Endothelial cell of umbilical vein (primary cell): ENCODE measurements at regions of chr14 and their contacts with region 1.

Region 1: GRCh38 chr14:61525293-61526011 is 169.9 kb upstream of the HIF1A start:
- DNase-seq: peak; percentile 88
- H3K4me3 ChIP-seq: peak overlapping the region in 1 of 3 experiments; percentile 6
- H3K27ac ChIP-seq: peak overlapping the region; percentile 89
- H3K4me1 ChIP-seq: peaks cover 55% of the 10 kb centered on the region
- H3K27me3 ChIP-seq: no peaks in the 10 kb centered on the region
- CTCF ChIP-seq: no peak
- POLR2A ChIP-seq: no peak

Region 2: DNA sequence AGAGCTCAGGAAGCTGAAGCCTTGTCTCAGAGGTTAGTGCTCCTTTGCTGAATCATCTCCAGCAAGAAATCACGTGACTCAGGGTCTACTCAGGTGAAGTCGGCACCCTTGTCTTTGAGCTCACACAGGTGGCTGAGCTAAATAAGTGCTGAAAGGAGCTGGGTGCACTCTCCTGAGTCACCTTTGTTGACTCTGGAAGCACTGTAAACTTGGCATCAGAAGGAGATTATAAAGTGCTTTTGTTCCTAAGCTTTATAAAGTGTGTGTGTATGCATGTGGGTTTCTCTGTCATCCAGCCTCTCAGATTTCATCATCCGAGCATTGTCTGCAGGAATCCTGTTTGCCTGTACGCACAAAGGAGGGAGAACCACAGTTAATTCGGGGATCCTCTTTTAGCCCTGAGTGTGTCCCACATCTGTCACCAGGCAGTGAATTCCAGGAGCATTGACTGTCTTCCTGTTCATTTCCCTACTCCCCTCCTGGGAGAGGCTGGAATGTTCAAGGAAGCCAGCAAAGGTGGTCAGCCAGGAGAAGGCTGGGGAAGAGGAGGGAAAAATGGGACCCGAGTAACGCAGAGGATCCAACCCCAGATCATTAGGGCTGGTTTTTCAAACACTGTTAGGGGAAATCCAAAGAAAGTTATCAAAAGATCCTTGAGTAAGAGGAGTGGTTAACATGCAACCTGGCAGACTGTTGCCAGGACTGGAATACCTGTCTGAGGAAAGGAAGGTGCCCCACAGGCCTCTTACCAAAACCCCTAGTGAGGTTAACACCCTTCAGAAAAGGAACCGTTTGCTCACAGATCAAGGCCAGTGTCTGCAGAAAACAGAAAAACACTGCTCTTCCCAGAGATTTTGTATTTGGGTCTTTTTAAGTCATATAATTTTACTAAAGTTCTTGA is 12.4 kb after region 1 on chr14:
- CTCF ChIA-PET with region 1: interaction called, 7 read pairs
- POLR2A ChIA-PET with region 1: interaction called, 5 read pairs
- dilution Hi-C with region 1: no loop called
- intact Hi-C with region 1: loop called (anchors 1 kb)
- DNase-seq: peak; percentile 78
- H3K4me3 ChIP-seq: no peak overlapping the region
- H3K27ac ChIP-seq: peak overlapping the region; percentile 51
- H3K4me1 ChIP-seq: peaks cover 34% of the 10 kb centered on the region
- H3K27me3 ChIP-seq: no peaks in the 10 kb centered on the region
- CTCF ChIP-seq: no peak
- POLR2A ChIP-seq: no peak

Region 3: DNA sequence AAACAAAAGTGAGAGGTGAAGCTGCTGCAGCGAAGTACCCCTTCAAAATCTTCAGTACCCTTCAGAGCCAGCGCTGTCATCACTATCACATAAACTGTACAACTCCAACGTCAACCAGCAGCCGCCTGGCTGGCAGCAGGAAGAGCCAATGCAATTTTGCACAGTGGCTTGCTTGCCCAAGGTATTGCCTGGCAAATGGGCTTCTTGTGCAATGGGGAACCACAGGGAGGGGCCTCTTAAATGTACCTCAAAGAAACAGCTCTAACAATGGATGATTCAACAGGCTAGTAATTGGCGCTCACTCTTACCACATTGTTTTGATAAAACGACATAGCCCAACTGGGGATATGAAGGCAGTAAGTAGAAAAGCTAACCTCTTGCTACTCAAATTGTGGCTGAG is 44.3 kb after region 1 on chr14:
- CTCF ChIA-PET with region 1: no interaction called
- POLR2A ChIA-PET with region 1: no interaction called
- dilution Hi-C with region 1: no loop called
- intact Hi-C with region 1: no loop called
- DNase-seq: peak; percentile 63
- H3K4me3 ChIP-seq: no peak overlapping the region
- H3K27ac ChIP-seq: no peak overlapping the region
- H3K4me1 ChIP-seq: peaks cover 35% of the 10 kb centered on the region
- H3K27me3 ChIP-seq: no peaks in the 10 kb centered on the region
- CTCF ChIP-seq: no peak
- POLR2A ChIP-seq: no peak

Region 4: DNA sequence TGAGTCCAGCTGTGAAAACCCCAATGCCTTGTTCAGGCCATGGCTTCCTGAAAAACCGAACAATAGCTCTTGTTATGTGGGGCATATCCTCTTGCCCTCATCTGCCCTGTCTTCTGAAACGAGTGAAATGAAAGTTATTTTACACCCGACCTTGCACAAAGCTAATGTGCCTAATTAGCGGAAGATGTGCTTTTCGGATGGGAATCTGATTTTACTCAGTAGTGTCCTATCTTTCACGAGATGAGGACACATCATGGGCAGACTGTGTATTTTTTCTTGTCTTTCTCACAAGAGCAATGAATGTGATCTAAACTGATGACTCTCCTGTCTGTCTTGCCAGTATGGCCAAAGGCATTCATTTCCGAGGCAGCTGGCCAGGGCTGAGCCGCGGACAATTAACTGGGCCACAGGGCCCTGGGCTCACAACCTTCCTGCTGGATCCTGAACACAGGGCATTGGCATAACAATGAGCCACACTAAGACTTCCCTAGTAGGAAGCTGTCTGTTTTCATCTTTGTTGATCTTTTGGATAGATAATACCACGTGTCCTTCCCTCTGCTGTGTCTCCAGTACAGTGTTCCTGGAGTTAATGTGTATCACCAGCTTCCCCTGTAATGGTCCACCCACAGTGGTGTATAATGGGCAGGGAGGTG is 83.9 kb after region 1 on chr14:
- CTCF ChIA-PET with region 1: interaction called, 3 read pairs
- POLR2A ChIA-PET with region 1: interaction called, 5 read pairs
- dilution Hi-C with region 1: no loop called
- intact Hi-C with region 1: loop called (anchors 2 kb)
- DNase-seq: peak; percentile 87
- H3K4me3 ChIP-seq: peak overlapping the region in 1 of 3 experiments; percentile 3
- H3K27ac ChIP-seq: peak overlapping the region; percentile 74
- H3K4me1 ChIP-seq: peaks cover 24% of the 10 kb centered on the region
- H3K27me3 ChIP-seq: no peaks in the 10 kb centered on the region
- CTCF ChIP-seq: no peak
- POLR2A ChIP-seq: no peak

Region 5: GRCh38 chr14:61653507-61653906 is 128.1 kb after region 1 on chr14:
- CTCF ChIA-PET with region 1: interaction called, 3 read pairs
- POLR2A ChIA-PET with region 1: no interaction called
- dilution Hi-C with region 1: no loop called
- intact Hi-C with region 1: loop called (anchors 1 kb)
- DNase-seq: peak; percentile 92
- H3K4me3 ChIP-seq: no peak overlapping the region
- H3K27ac ChIP-seq: peak overlapping the region; percentile 14
- H3K4me1 ChIP-seq: peaks cover 19% of the 10 kb centered on the region
- H3K27me3 ChIP-seq: no peaks in the 10 kb centered on the region
- CTCF ChIP-seq: no peak
- POLR2A ChIP-seq: no peak